Ovary (tissue), 10 donors: ENCODE measurements at regions of chr11 and their contacts with region 1.

Region 1: GRCh38 chr11:59550368-59550841 is 39.1 kb downstream of the OR4D9 start:
- DNase-seq: peak; percentile 78 to 85 (median 84)
- H3K4me3 ChIP-seq: peak overlapping the region; percentile 60
- H3K27ac ChIP-seq: peak overlapping the region; percentile 86 to 91
- H3K4me1 ChIP-seq: peaks cover 11% of the 10 kb centered on the region
- H3K27me3 ChIP-seq: no peaks in the 10 kb centered on the region
- CTCF ChIP-seq: peak in 2 of 3 donors; percentile 61 to 74
- EP300 ChIP-seq: no peak
- POLR2A ChIP-seq: no peak

Region 2: GRCh38 chr11:57667736-57668435 is 1882.5 kb before region 1 on chr11 and contains the start of gene ZDHHC5:
- intact Hi-C with region 1: loop called in 1 of 4 experiments (anchors 10 kb)
- DNase-seq: peak; percentile 98 to 99 (median 99)
- H3K4me3 ChIP-seq: peak within 1 kb of the TSS; percentile 85
- H3K27ac ChIP-seq: peak within 1 kb of the TSS; percentile 85 to 98
- H3K4me1 ChIP-seq: peaks cover 2% of the 10 kb centered on the region
- H3K27me3 ChIP-seq: no peaks in the 10 kb centered on the region
- CTCF ChIP-seq: peak; percentile 49 to 82 (median 64)
- EP300 ChIP-seq: no peak
- POLR2A ChIP-seq: peak; percentile 64
- total RNA-seq, gene ZDHHC5: 19.9 to 54.1 (median 39.9) TPM